A673 (cell line): ENCODE measurements at regions of chr1 and their contacts with region 1.

Region 1: DNA sequence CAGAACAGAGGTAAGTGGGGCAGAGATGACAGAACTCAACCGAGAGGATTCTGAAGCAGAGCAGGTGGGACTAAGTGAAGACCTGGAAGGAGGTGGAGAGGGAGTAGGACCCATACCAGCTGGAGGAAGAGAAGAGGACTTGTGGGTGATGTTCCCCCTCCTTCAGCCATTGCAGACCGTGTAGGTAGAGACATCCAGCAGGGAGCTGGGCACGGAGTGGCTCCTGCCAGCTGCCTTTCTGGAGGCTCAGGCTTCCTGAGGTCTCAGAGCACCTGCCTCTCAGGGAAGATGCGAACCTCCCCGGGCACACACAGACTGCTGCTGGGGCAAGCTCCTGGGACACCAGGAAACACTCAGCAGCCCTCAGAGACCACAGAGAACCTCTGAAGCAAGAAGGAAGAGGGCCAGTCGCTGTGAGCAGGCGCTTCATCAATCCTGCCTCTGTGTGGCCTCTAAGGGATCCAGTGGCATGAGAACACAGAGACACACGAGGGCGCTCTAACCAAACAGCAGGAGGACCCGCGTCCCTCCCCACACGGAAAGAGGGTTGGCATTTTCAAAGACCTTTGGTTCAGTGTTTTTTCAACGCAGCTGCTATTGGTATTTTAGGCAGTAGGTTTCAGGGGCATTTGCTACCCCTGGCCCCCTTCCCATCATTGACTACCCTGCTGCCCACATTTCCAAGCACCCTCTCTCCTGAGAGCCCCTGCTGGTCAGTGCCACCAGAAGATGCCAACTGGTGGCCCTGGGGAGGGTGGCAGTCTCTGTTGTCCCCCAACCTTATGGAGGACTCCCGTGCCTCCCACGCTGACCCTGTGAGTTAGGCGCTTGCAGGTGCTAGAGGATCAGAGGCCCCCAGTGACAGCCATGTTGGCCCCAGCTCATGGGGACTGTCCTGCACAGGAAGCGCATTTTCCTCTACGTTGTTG is 89.6 kb upstream of the EDN2 start:
- DNase-seq: peak; percentile 89
- H3K4me3 ChIP-seq: no peak overlapping the region
- H3K27ac ChIP-seq: no peak overlapping the region
- H3K4me1 ChIP-seq: peaks cover 13% of the 10 kb centered on the region
- H3K27me3 ChIP-seq: no peaks in the 10 kb centered on the region
- CTCF ChIP-seq: peak; percentile 96

Region 2: DNA sequence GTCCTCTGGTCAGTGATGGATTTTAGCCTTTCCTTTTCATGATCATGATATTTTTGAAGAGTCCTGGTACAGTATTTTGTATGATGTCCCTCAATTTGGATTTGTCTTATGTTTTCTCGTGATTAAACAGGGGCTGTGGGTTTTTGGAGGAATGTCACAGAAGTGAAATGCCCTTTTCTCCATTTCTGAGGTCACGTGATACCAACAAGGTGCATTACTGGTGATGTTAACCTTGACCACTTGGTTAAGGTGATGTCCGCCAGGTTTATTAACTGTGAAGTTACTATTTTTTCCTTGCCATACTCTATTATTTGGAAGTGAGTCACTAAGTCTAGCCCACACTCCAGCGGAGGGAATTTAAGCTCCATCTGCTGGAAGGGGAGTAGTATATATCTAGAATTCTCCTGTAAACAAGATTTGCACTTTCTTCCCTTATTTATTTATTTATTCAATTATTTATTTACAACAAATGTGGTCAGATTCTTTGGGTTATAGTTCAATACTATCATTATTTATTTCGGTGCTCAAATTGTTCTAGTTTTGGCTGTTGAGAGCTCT is 221.2 kb after region 1 on chr1:
- CTCF ChIA-PET with region 1: no interaction called
- POLR2A ChIA-PET with region 1: no interaction called
- intact Hi-C with region 1: loop called (anchors 1 kb)
- DNase-seq: peak; percentile 45
- H3K4me3 ChIP-seq: no peak overlapping the region
- H3K27ac ChIP-seq: no peak overlapping the region
- H3K4me1 ChIP-seq: no peaks in the 10 kb centered on the region
- H3K27me3 ChIP-seq: no peaks in the 10 kb centered on the region
- CTCF ChIP-seq: peak; percentile 49

Region 3: DNA sequence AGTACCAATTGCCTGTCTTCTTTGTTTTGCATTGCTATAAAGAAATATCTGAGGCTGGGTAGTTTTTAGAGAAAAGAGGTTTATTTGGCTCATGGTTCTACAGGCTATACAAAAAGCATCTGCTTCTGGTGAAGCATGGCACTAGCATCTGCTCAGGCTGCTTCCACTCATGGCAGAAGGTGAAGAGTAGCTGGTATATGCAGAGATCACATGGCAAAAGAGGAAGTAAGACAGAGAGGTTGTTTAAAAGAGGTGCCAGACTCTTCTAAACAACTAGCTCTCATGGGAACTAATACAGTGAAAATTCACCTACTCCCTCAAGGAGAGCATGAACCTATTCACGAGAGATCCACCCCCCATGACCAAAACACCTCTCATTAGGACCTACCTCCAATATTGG is 522.5 kb after region 1 on chr1:
- CTCF ChIA-PET with region 1: no interaction called
- POLR2A ChIA-PET with region 1: no interaction called
- intact Hi-C with region 1: no loop called
- DNase-seq: no peak
- H3K4me3 ChIP-seq: no peak overlapping the region
- H3K27ac ChIP-seq: no peak overlapping the region
- H3K4me1 ChIP-seq: no peaks in the 10 kb centered on the region
- H3K27me3 ChIP-seq: peaks cover 14% of the 10 kb centered on the region
- CTCF ChIP-seq: no peak

Region 4: GRCh38 chr1:42146626-42147320 is 572.7 kb after region 1 on chr1:
- CTCF ChIA-PET with region 1: no interaction called
- POLR2A ChIA-PET with region 1: no interaction called
- intact Hi-C with region 1: loop called (anchors 10 kb)
- DNase-seq: peak; percentile 62
- H3K4me3 ChIP-seq: no peak overlapping the region
- H3K27ac ChIP-seq: no peak overlapping the region
- H3K4me1 ChIP-seq: no peaks in the 10 kb centered on the region
- H3K27me3 ChIP-seq: peaks cover 7% of the 10 kb centered on the region
- CTCF ChIP-seq: peak; percentile 91

Region 5: DNA sequence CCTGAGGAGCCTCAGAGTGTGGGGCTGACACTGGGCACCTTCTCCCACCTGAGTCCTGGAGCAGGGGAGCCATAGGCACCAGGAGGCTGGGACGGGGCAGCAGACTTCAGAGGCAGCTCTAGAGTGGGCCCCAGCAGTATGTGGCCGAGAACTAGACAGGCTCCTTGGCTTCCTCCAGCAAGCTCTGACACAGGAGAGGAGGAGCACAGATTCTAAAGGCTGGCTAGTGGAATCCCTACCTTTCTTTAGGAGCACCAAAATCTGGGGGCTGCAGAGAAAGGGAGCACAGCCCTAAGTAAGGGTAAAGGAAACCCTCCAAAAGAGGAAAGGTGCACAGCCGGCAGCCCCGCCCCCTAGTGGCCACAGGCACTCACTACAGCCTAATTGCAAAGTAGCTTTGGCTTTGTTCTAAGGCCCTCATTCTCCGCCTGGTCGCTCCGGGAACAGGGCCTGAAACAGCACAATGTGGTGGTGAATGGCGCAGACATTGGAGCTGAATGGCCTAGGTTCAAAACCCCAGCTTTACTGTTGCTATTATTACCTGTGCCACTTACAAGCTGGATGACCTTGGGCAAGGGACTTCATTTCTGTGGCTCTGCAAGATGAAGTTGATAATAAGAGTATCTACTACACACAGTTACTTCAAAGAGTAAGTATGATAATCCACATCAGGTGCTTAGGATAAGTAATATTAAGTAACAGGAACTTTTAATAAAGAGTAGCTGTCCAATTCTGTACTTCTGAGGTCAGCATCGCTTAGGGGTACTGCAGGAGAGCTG is 599.3 kb after region 1 on chr1:
- CTCF ChIA-PET with region 1: no interaction called
- POLR2A ChIA-PET with region 1: no interaction called
- intact Hi-C with region 1: loop called (anchors 1 kb)
- DNase-seq: peak; percentile 71
- H3K4me3 ChIP-seq: no peak overlapping the region
- H3K27ac ChIP-seq: no peak overlapping the region
- H3K4me1 ChIP-seq: peaks cover 4% of the 10 kb centered on the region
- H3K27me3 ChIP-seq: no peaks in the 10 kb centered on the region
- CTCF ChIP-seq: peak; percentile 99